Mammary epithelial cell (primary cell): ENCODE measurements at regions of chr14 and their contacts with region 1.

Region 1: DNA sequence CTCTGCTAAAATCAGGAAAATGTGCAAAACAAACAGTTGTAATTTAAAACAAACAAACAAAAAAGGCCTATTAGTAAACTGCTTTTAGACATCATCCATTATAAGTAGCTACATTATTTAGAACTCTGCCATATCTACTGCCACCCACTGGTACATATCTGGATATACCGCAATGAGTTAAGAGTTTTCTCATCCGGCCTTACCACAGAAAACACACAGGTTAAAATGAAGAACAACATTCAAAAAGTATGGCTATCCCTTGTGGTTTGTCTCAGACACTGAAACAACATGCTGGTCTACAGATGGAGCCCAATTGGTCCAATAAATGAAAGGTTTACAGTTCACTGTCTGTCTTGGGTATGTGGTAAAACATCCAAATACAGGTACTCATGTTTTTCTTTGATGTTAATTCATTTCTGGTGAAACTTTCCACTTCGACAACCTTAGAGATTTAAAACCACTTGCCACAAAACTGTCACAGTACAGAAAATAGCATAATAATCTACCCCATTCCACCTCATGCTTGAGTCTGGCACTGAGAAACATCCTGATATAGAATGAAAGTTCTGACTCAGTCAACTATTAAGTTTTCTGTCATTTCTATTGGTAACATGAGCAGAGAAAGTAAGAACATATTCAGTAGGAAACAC is 354.3 kb downstream of the CEP128 start:
- DNase-seq: peak; percentile 49
- H3K4me3 ChIP-seq: no peak overlapping the region
- H3K27ac ChIP-seq: no peak overlapping the region
- H3K4me1 ChIP-seq: peaks cover 14% of the 10 kb centered on the region
- H3K27me3 ChIP-seq: no peaks in the 10 kb centered on the region
- CTCF ChIP-seq: peak; percentile 72 to 79

Region 2: DNA sequence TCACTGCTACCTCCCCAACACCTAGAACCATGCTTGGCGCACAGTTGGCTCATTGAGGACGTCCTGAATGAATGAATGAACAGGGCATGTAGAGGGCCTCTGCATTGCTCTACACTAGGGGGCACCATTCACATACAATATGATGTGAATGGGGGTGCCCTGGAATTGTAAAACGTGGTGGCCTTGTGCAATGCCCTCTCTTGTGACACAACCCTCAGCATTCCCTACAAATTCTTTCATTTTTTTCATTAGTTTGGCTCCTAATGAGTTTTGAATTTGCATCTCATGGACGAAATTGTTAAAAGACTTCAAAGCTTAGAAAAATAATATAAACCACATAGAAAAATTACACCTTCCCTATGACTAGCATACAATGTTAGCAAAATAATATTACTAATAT is 373.6 kb before region 1 on chr14:
- CTCF ChIA-PET with region 1: no interaction called
- dilution Hi-C with region 1: no loop called
- in situ Hi-C with region 1: loop called in 1 of 2 experiments (anchors 25 kb)
- intact Hi-C with region 1: loop called (anchors 1 kb)
- DNase-seq: peak; percentile 50
- H3K4me3 ChIP-seq: no peak overlapping the region
- H3K27ac ChIP-seq: no peak overlapping the region
- H3K4me1 ChIP-seq: no peaks in the 10 kb centered on the region
- H3K27me3 ChIP-seq: peaks cover 2% of the 10 kb centered on the region
- CTCF ChIP-seq: peak; percentile 81 to 82

Region 3: GRCh38 chr14:80364274-80364673 is 222.9 kb before region 1 on chr14:
- CTCF ChIA-PET with region 1: no interaction called
- dilution Hi-C with region 1: no loop called
- in situ Hi-C with region 1: no loop called
- intact Hi-C with region 1: loop called (anchors 5 kb)
- DNase-seq: no peak
- H3K4me3 ChIP-seq: no peak overlapping the region
- H3K27ac ChIP-seq: no peak overlapping the region
- H3K4me1 ChIP-seq: no peaks in the 10 kb centered on the region
- H3K27me3 ChIP-seq: no peaks in the 10 kb centered on the region
- CTCF ChIP-seq: peak; percentile 31 to 50

Region 4: DNA sequence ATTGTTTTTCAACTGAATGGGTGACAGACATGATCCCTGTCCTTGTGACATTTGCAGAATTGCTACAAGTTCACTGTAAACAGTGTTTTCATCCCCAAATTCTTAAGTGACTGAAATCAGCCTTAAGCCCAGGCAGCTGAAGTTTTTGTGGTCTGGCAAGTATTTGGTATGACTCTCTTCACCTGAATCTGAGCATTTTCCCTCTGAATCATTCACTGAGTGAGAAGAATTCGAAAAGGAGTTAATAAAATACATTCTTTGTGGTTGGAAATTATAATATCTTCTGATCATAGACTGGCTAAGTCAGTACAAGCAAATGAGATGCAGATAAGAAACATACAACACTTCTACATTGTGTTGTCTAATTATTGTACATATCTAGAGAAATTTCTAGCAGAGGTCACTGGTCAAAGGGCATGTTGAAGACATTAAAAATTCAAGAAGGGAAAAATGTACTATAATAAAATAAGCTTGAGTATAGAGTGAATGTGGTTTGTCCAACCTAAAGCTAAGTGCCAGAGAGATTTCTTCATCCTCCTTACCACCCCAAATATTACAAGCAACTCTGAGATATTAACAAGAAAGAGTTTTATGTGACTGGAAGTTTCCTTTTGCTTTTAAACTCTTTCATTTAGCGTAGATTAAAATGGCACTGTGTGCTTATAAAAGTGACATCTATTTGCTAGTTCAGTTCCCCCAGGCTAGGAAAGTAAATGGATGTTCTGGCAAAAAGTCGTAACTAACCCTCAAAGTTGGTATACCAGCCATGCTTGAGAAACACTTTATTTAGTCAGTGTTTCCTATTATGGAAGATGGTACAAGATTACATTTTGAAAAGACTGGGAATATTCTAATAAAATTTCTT is 197.9 kb before region 1 on chr14:
- CTCF ChIA-PET with region 1: no interaction called
- dilution Hi-C with region 1: no loop called
- in situ Hi-C with region 1: no loop called
- intact Hi-C with region 1: loop called (anchors 5 kb)
- DNase-seq: peak; percentile 82
- H3K4me3 ChIP-seq: no peak overlapping the region
- H3K27ac ChIP-seq: peak overlapping the region; percentile 78
- H3K4me1 ChIP-seq: peaks cover 42% of the 10 kb centered on the region
- H3K27me3 ChIP-seq: no peaks in the 10 kb centered on the region
- CTCF ChIP-seq: no peak

Region 5: DNA sequence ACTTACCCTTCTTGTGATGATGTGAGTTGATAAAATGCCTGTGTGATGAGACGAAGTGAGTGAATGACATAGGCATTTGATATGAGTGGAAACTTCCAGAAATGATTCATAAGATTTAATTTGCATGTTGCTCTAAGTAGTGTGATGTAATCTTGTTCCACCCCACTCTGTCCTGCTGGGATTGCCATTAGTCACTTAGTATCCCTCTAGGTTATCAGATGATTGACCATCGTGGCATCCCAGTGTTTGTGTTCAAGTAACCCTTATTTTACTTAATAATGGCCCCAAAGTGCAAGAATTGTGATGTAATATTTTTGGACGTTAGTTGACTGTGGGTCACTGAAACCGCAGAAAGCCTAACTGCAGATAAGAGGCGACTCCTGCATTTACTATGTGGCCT is 161.5 kb before region 1 on chr14:
- CTCF ChIA-PET with region 1: no interaction called
- dilution Hi-C with region 1: no loop called
- in situ Hi-C with region 1: no loop called
- intact Hi-C with region 1: loop called (anchors 5 kb)
- DNase-seq: peak; percentile 91
- H3K4me3 ChIP-seq: no peak overlapping the region
- H3K27ac ChIP-seq: peak overlapping the region; percentile 67
- H3K4me1 ChIP-seq: peaks cover 15% of the 10 kb centered on the region
- H3K27me3 ChIP-seq: no peaks in the 10 kb centered on the region
- CTCF ChIP-seq: no peak

Region 6: DNA sequence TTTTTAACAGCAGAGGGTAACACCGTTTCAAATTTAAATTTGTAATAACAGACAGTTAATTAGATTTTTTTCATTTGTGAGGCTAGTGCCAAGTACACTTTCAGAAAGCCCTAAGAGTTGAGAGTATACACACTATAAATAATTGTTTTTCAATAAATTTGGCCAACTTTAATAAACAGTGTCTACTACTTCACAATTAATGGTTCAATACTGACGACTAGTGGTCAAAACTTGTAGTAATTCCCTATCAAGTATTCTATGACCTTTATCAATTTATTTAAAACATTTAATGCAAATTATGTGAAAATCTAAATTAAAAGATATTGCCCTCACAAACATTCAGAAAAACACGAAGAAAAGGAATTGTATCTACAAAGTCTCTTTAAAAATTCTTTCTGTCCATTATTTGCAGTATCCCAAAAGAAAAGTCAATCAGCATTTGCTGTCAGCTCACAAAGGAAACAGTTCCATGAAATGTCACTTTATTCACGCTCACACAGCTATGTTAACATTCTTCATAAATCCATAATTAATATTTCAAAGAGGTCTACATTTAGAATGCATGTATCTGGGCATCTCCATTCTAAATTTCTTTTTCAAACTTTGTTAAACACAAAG is 263.1 kb after region 1 on chr14:
- CTCF ChIA-PET with region 1: no interaction called
- dilution Hi-C with region 1: no loop called
- in situ Hi-C with region 1: no loop called
- intact Hi-C with region 1: loop called (anchors 5 kb)
- DNase-seq: no peak
- H3K4me3 ChIP-seq: no peak overlapping the region
- H3K27ac ChIP-seq: no peak overlapping the region
- H3K4me1 ChIP-seq: no peaks in the 10 kb centered on the region
- H3K27me3 ChIP-seq: no peaks in the 10 kb centered on the region
- CTCF ChIP-seq: peak; percentile 43 to 52